CD4-positive, alpha-beta memory T cell (primary cell): ENCODE measurements at regions of chr6 and their contacts with region 1.

Region 1: GRCh38 chr6:131063028-131063763 is at the start of gene EPB41L2:
- DNase-seq: peak; percentile 76 to 81 (median 78)
- H3K4me3 ChIP-seq: peak within 1 kb of the TSS; percentile 54 to 59
- H3K4me3 Mint-ChIP-seq: peak within 1 kb of the TSS; percentile 82 to 88 (median 86)
- H3K27ac ChIP-seq: peak within 1 kb of the TSS; percentile 38
- H3K27ac Mint-ChIP-seq: peak within 1 kb of the TSS; percentile 12 to 92 (median 81)
- H3K4me1 ChIP-seq: peaks cover 15% of the 10 kb centered on the region
- H3K4me1 Mint-ChIP-seq: peaks cover 18 to 36% (median 25%) of the 10 kb centered on the region in 4 donors
- H3K27me3 ChIP-seq: no peaks in the 10 kb centered on the region
- H3K27me3 Mint-ChIP-seq: no peaks in the 10 kb centered on the region
- total RNA-seq, gene EPB41L2: 18.4 to 24.3 TPM

Region 2: GRCh38 chr6:131096786-131097185 is 33.6 kb after region 1 on chr6:
- CTCF ChIA-PET with region 1: no interaction called
- POLR2A ChIA-PET with region 1: no interaction called
- intact Hi-C with region 1: no loop called
- DNase-seq: no peak
- H3K4me3 ChIP-seq: no peak overlapping the region
- H3K4me3 Mint-ChIP-seq: no peak overlapping the region
- H3K27ac ChIP-seq: no peak overlapping the region
- H3K27ac Mint-ChIP-seq: no peak overlapping the region
- H3K4me1 ChIP-seq: no peaks in the 10 kb centered on the region
- H3K4me1 Mint-ChIP-seq: no peaks in the 10 kb centered on the region
- H3K27me3 ChIP-seq: no peaks in the 10 kb centered on the region
- H3K27me3 Mint-ChIP-seq: peaks cover 0 to 6% of the 10 kb centered on the region in 2 donors

Region 3: GRCh38 chr6:131116749-131117360 is 53.7 kb after region 1 on chr6:
- CTCF ChIA-PET with region 1: interaction called, 4 read pairs
- POLR2A ChIA-PET with region 1: no interaction called
- intact Hi-C with region 1: loop called (anchors 5 kb)
- DNase-seq: peak in 4 of 5 donors; percentile 37 to 51 (median 48)
- H3K4me3 ChIP-seq: no peak overlapping the region
- H3K4me3 Mint-ChIP-seq: no peak overlapping the region
- H3K27ac ChIP-seq: no peak overlapping the region
- H3K27ac Mint-ChIP-seq: no peak overlapping the region
- H3K4me1 ChIP-seq: no peaks in the 10 kb centered on the region
- H3K4me1 Mint-ChIP-seq: no peaks in the 10 kb centered on the region
- H3K27me3 ChIP-seq: no peaks in the 10 kb centered on the region
- H3K27me3 Mint-ChIP-seq: peaks cover 0 to 2% of the 10 kb centered on the region in 2 donors

Region 4: GRCh38 chr6:131135244-131136020 is 72.2 kb after region 1 on chr6 and contains the start of gene AKAP7:
- CTCF ChIA-PET with region 1: no interaction called
- POLR2A ChIA-PET with region 1: no interaction called
- intact Hi-C with region 1: loop called (anchors 5 kb)
- DNase-seq: peak; percentile 47 to 58 (median 52)
- H3K4me3 ChIP-seq: peak within 1 kb of the TSS; percentile 58 to 67
- H3K4me3 Mint-ChIP-seq: peak within 1 kb of the TSS; percentile 92 to 98 (median 94)
- H3K27ac ChIP-seq: peak within 1 kb of the TSS; percentile 27
- H3K27ac Mint-ChIP-seq: peak within 1 kb of the TSS; percentile 74 to 96 (median 94)
- H3K4me1 ChIP-seq: peaks cover 17% of the 10 kb centered on the region
- H3K4me1 Mint-ChIP-seq: peaks cover 12 to 32% (median 22%) of the 10 kb centered on the region in 4 donors
- H3K27me3 ChIP-seq: no peaks in the 10 kb centered on the region
- H3K27me3 Mint-ChIP-seq: peaks cover 1 to 5% of the 10 kb centered on the region in 2 donors
- total RNA-seq, gene AKAP7: 15.4 to 16.2 TPM